Activated CD4-positive, alpha-beta memory T cell treated with anti-CD3 and anti-CD28 coated beads, Interleukin-2, amount 10 ng/mL, durations not matched to agents 7 days and 5 days (primary cell): ENCODE measurements at regions of chr1 and their contacts with region 1.

Region 1: GRCh38 chr1:108691942-108692723 is at the start of gene PRPF38B:
- DNase-seq: peak; percentile 96
- H3K4me3 Mint-ChIP-seq: peak within 1 kb of the TSS; percentile 91
- H3K27ac Mint-ChIP-seq: peak within 1 kb of the TSS; percentile 96
- H3K4me1 Mint-ChIP-seq: peaks cover 43% of the 10 kb centered on the region
- H3K27me3 Mint-ChIP-seq: no peaks in the 10 kb centered on the region
- total RNA-seq, gene PRPF38B: 68.5 to 70.5 TPM

Region 2: GRCh38 chr1:108559215-108560186 is 132.6 kb before region 1 on chr1 and contains the start of gene EEIG2:
- CTCF ChIA-PET with region 1: interaction called, 15 read pairs
- POLR2A ChIA-PET with region 1: interaction called, 53 read pairs
- DNase-seq: peak; percentile 93
- H3K4me3 Mint-ChIP-seq: peak within 1 kb of the TSS; percentile 95
- H3K27ac Mint-ChIP-seq: peak within 1 kb of the TSS; percentile 86
- H3K4me1 Mint-ChIP-seq: peaks cover 34% of the 10 kb centered on the region
- H3K27me3 Mint-ChIP-seq: peaks cover 12% of the 10 kb centered on the region
- total RNA-seq, gene EEIG2: 22.6 to 23.6 TPM

Region 3: GRCh38 chr1:108661030-108661620 is 31.0 kb before region 1 on chr1 and contains the start of gene HENMT1:
- CTCF ChIA-PET with region 1: interaction called, 45 read pairs
- POLR2A ChIA-PET with region 1: interaction called, 182 read pairs
- DNase-seq: peak; percentile 82
- H3K4me3 Mint-ChIP-seq: peak within 1 kb of the TSS; percentile 78
- H3K27ac Mint-ChIP-seq: peak within 1 kb of the TSS; percentile 90
- H3K4me1 Mint-ChIP-seq: peaks cover 45% of the 10 kb centered on the region
- H3K27me3 Mint-ChIP-seq: no peaks in the 10 kb centered on the region
- total RNA-seq, gene HENMT1: 26.7 to 27.3 TPM

Region 4: GRCh38 chr1:108708691-108709660 is 16.8 kb after region 1 on chr1:
- CTCF ChIA-PET with region 1: interaction called, 38 read pairs
- POLR2A ChIA-PET with region 1: interaction called, 146 read pairs
- DNase-seq: peak; percentile 70
- H3K4me3 Mint-ChIP-seq: no peak overlapping the region
- H3K27ac Mint-ChIP-seq: no peak overlapping the region
- H3K4me1 Mint-ChIP-seq: peaks cover 33% of the 10 kb centered on the region
- H3K27me3 Mint-ChIP-seq: no peaks in the 10 kb centered on the region

Region 5: DNA sequence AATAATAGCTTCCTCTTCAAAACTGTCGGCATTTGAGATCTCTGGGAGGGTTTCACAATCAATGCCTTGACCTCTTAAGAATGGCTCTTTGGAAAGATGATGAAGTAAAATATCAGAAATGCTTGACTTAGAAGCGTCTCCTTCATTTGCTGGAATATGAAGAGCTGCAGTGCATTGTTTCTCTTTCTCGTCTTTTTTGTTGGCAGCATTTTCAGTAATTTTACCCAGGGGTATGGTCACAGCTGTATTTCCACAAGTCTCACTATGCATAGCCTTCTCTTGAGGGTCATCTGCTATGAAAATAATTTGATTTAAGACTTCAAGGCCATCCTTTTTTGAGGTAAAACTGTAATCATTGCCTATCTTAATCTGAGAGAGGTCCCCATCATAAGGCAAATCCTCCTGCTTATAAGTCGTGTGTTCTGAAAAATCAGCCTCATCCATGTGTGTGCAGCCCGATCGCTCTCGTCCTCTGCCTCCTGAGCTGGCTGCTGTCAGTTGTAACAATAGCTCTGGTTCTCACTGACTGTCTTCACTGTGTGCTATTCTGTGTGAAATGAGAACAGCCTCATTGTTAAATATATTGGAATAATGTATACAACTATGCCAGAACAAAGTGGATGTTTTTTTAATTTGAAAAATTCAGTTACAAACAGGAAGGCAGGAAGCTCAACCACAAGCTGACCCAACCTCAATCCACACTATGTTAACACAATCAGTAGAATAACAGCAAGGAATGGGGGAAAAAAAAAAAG is 160.3 kb after region 1 on chr1:
- CTCF ChIA-PET with region 1: no interaction called
- POLR2A ChIA-PET with region 1: no interaction called
- DNase-seq: no peak
- H3K4me3 Mint-ChIP-seq: no peak overlapping the region
- H3K27ac Mint-ChIP-seq: peak overlapping the region; percentile 45
- H3K4me1 Mint-ChIP-seq: peaks cover 24% of the 10 kb centered on the region
- H3K27me3 Mint-ChIP-seq: peaks cover 15% of the 10 kb centered on the region

Region 6: GRCh38 chr1:108897865-108898720 is 206.0 kb after region 1 on chr1:
- CTCF ChIA-PET with region 1: interaction called, 25 read pairs
- POLR2A ChIA-PET with region 1: interaction called, 10 read pairs
- DNase-seq: peak; percentile 23
- H3K4me3 Mint-ChIP-seq: no peak overlapping the region
- H3K27ac Mint-ChIP-seq: no peak overlapping the region
- H3K4me1 Mint-ChIP-seq: no peaks in the 10 kb centered on the region
- H3K27me3 Mint-ChIP-seq: no peaks in the 10 kb centered on the region